MCF 10A (cell line): ENCODE measurements at regions of chr3 and their contacts with region 1.

Region 1: DNA sequence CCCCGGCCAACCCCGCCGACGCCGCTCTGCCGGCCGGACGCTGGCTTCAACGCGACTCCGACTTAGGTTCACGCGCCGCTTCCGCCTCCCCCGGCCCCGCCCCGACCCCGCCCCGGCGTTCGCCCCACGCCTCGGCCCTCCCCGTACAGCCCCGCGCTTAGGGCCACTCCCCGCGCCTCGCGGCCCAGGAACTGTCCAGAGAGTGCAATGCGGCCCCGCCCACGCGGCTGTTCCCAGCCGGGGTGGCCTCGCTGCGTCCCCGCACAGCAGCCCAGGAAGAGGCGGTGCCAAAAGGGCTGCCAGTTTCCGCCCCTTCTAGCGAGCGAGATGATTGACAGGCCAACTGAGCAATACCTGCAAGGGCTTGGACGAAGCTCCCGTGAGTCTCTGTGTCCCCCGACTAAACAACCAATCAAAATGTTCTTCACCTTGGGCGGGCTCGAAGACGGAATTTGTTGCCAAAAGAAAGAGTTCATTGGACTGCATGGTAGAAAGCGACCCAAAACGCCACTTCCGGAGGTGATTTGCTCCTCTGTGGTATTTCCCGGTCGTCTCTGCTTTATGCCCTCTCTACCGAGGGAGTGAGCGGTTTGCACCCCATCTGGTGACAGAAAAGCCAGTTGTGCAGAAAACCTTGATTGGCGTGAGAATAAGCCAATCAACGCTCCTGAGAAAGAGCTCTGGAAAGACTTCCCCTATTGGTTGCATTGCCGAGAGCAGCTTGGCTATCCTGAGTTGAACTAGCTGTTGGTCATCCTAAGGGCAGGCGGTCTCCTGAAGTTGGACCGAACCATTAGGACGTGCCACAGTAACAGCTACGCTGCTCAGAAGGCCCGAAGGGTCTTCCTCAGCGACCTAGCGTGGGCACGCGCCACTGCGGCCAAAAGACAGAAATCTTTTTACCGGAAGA is at the start of gene UBP1:
- DNase-seq: peak; percentile 100
- H3K4me3 Mint-ChIP-seq: peak within 1 kb of the TSS; percentile 99
- H3K27ac Mint-ChIP-seq: peak within 1 kb of the TSS; percentile 99
- H3K4me1 Mint-ChIP-seq: peaks cover 14% of the 10 kb centered on the region
- H3K27me3 Mint-ChIP-seq: no peaks in the 10 kb centered on the region
- CTCF ChIP-seq: no peak
- total RNA-seq, gene UBP1: 55.6 and 72.6 TPM in 2 replicates

Region 2: GRCh38 chr3:33392703-33393125 is 47.9 kb before region 1 on chr3:
- CTCF ChIA-PET with region 1: interaction called, 3 read pairs
- POLR2A ChIA-PET with region 1: no interaction called
- intact Hi-C with region 1: loop called (anchors 5 kb)
- DNase-seq: peak; percentile 93
- H3K4me3 Mint-ChIP-seq: no peak overlapping the region
- H3K27ac Mint-ChIP-seq: peak overlapping the region; percentile 13
- H3K4me1 Mint-ChIP-seq: peaks cover 14% of the 10 kb centered on the region
- H3K27me3 Mint-ChIP-seq: no peaks in the 10 kb centered on the region
- CTCF ChIP-seq: no peak

Region 3: DNA sequence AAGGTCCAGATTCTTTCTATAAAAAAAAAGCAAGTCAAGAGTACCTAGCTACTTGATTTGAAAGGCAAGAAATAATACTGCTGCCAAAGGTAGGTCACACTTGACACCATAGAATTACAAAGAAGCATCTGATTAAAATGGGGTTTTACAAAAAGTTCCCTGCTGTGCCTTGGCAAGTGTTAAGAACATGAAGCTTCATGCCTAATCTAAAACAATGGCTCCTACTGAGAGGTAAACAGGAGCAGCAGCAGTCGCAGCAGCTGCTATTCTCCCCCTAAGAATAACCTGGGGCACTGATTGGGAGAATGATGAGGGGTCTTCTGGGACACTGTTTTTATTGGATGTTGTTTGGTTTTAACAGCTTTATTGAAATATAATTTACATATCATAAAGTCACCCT is 14.5 kb before region 1 on chr3:
- CTCF ChIA-PET with region 1: interaction called, 12 read pairs
- POLR2A ChIA-PET with region 1: interaction called, 135 read pairs
- intact Hi-C with region 1: no loop called
- DNase-seq: no peak
- H3K4me3 Mint-ChIP-seq: no peak overlapping the region
- H3K27ac Mint-ChIP-seq: peak overlapping the region; percentile 62
- H3K4me1 Mint-ChIP-seq: peaks cover 46% of the 10 kb centered on the region
- H3K27me3 Mint-ChIP-seq: no peaks in the 10 kb centered on the region
- CTCF ChIP-seq: no peak

Region 4: DNA sequence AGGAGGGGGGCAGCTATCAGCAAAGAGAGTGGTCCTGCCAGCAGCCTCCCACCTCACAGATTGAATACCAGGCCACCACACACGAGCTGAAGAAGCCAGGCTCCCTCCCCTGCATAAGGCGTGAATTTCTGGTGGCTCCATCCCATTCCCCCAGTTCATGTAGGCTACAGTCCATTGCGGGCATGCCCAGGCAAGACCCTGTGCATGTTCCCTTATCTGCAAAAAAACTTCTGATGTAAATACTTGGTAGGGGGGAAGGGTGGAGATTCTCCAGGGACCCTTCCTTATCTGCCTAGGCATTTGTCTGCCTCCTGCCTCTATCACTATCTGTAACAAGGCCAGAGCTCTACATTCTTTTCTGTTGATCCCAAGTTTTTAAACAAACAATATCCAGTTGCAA is 27.2 kb after region 1 on chr3:
- CTCF ChIA-PET with region 1: interaction called, 5 read pairs
- POLR2A ChIA-PET with region 1: interaction called, 15 read pairs
- intact Hi-C with region 1: no loop called
- DNase-seq: no peak
- H3K4me3 Mint-ChIP-seq: no peak overlapping the region
- H3K27ac Mint-ChIP-seq: peak overlapping the region; percentile 63
- H3K4me1 Mint-ChIP-seq: peaks cover 6% of the 10 kb centered on the region
- H3K27me3 Mint-ChIP-seq: no peaks in the 10 kb centered on the region
- CTCF ChIP-seq: no peak

Region 5: GRCh38 chr3:33612607-33613006 is 172.0 kb after region 1 on chr3:
- CTCF ChIA-PET with region 1: no interaction called
- POLR2A ChIA-PET with region 1: no interaction called
- intact Hi-C with region 1: no loop called
- DNase-seq: no peak
- H3K4me3 Mint-ChIP-seq: no peak overlapping the region
- H3K27ac Mint-ChIP-seq: no peak overlapping the region
- H3K4me1 Mint-ChIP-seq: no peaks in the 10 kb centered on the region
- H3K27me3 Mint-ChIP-seq: no peaks in the 10 kb centered on the region
- CTCF ChIP-seq: no peak

Region 6: DNA sequence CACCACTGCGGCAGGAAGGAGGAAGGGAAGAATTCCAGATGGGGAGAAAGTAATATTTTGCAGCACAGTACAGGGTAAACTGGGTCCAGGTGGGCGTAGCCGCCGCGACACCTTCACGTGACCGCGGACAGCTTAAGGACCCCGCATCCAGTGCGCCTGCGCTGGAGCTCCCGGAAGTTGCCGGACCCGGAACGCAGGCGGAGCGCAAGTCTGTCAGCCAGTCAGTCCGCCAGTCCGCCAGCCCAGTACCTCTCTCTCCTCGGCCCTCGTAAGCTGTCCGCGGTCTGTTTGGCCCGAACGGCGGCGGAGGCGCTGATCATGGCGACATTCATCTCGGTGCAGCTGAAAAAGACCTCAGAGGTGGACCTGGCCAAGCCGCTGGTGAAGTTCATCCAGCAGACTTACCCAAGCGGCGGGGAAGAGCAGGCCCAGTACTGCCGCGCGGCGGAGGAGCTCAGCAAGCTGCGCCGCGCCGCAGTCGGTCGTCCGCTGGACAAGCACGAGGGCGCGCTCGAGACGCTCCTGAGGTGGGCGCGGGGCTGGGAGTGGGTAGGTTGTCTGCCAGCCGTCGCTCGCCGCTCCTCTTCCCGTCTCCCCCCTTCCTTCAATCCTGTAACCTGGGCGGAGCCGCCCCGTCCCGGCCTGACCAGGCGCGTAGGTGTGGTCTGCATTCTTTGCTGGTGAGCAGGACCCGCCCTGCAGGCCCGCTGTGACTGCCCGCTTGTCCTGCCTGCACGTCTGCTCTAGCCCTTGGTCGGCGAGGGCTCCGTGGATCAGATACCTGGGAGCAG is 358.0 kb after region 1 on chr3 and contains the start of gene PDCD6IP:
- CTCF ChIA-PET with region 1: no interaction called
- POLR2A ChIA-PET with region 1: interaction called, 42 read pairs
- intact Hi-C with region 1: no loop called
- DNase-seq: peak; percentile 92
- H3K4me3 Mint-ChIP-seq: peak within 1 kb of the TSS; percentile 90
- H3K27ac Mint-ChIP-seq: peak within 1 kb of the TSS; percentile 93
- H3K4me1 Mint-ChIP-seq: peaks cover 41% of the 10 kb centered on the region
- H3K27me3 Mint-ChIP-seq: no peaks in the 10 kb centered on the region
- CTCF ChIP-seq: no peak
- total RNA-seq, gene PDCD6IP: 286 and 304 TPM in 2 replicates